ENCODE measurements at regions of chr14 and their contacts with region 1.

Region 1: GRCh38 chr14:29681316-29681715 is 246.3 kb downstream of the PRKD1 start:
- DNase-seq: peak; percentile 19
- ATAC-seq: peak; percentile 97
- H3K4me3 ChIP-seq: no peak overlapping the region
- H3K27ac ChIP-seq: no peak overlapping the region
- H3K4me1 ChIP-seq: no peaks in the 10 kb centered on the region
- H3K27me3 ChIP-seq: no peaks in the 10 kb centered on the region
- CTCF ChIP-seq: no peak

Region 2: DNA sequence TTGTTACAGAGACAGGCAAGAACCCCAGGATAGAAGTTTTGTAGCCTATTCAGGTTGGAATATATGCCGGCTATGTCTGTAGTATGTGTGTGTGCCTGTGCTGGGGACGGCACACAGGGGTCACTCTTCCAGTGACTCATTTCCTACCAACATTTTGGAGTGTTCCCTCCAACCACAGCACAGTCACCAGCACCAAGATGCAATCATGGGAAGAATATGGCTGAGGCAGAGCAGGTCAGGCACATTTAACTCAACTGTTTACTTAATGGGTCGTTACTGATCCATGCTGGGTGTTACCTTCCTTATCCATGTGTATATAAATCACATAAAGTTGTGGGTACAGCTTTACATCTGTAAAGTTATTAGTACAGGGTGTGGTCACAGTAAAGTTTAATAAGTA is 68.0 kb after region 1 on chr14:
- CTCF ChIA-PET with region 1: no interaction called
- POLR2A ChIA-PET with region 1: no interaction called
- intact Hi-C with region 1: loop called (anchors 5 kb)
- DNase-seq: peak; percentile 59
- ATAC-seq: peak; percentile 90
- H3K4me3 ChIP-seq: no peak overlapping the region
- H3K27ac ChIP-seq: peak overlapping the region; percentile 41
- H3K4me1 ChIP-seq: peaks cover 11% of the 10 kb centered on the region
- H3K27me3 ChIP-seq: no peaks in the 10 kb centered on the region
- CTCF ChIP-seq: no peak

Region 3: DNA sequence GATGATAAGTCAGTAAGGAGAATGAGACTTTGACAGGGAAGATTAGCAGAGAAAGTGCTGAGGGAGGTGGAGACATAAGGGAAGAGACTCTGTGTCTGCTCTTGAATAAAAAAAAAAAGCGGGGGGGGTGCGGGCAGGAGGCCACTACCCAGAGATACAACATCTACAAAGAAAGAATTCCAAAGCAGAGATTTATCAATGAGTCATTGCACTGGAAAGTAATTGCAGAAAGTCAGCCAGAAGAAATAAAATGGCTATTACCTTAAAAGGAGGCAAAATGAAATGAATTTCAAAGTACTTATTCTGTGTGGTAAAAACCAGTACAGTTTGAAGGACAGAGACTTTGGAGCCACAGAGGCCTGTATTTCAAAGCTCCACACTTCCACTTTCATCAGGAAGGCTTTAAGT is 513.4 kb after region 1 on chr14:
- CTCF ChIA-PET with region 1: no interaction called
- POLR2A ChIA-PET with region 1: no interaction called
- intact Hi-C with region 1: no loop called
- DNase-seq: peak; percentile 7
- ATAC-seq: no peak
- H3K4me3 ChIP-seq: no peak overlapping the region
- H3K27ac ChIP-seq: no peak overlapping the region
- H3K4me1 ChIP-seq: no peaks in the 10 kb centered on the region
- H3K27me3 ChIP-seq: peaks cover 23% of the 10 kb centered on the region
- CTCF ChIP-seq: no peak